Activated CD4-positive, alpha-beta T cell treated with anti-CD3 and anti-CD28 coated beads for 36 hours (primary cell): ENCODE measurements at regions of chr7 and their contacts with region 1.

Region 1: GRCh38 chr7:24869572-24869971 is 110.4 kb downstream of the OSBPL3 start:
- DNase-seq: no peak
- ATAC-seq: no peak
- H3K4me3 Mint-ChIP-seq: no peak overlapping the region
- H3K27ac Mint-ChIP-seq: no peak overlapping the region
- H3K4me1 Mint-ChIP-seq: peaks cover 41% of the 10 kb centered on the region
- H3K27me3 Mint-ChIP-seq: no peaks in the 10 kb centered on the region

Region 2: DNA sequence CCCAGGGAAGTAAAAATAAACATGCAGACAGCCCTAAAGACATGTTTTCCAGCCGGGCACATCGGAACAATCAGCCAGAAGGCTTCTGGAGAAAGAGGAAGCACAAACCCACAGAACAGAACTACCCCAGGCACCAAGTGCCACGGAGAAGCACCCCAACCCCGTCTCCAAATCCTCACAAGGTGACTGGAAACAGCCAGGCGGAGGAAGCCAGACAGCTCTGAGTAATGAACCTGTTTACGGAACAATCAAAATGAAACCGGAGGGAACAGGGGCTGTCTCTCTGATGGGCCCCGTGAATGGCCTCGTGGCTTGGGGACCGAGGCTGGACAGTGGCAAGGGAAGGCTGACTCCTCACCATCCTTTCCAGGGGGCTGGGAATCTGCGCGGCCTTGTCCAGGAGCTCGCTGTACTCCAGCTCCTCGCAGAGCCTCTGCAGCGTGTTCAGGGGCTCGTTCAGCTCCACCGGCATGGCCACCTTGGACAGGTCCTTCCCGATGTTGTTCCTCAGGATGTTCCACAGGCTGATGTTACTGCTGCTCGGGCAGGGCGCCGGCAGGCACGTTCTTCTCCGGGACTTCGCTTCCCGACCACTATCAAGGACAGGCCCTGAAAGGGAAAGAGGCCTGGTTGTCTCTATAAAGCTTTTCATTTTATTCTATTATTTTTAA is 35.3 kb before region 1 on chr7:
- CTCF ChIA-PET with region 1: no interaction called
- POLR2A ChIA-PET with region 1: no interaction called
- intact Hi-C with region 1: loop called in 1 of 2 experiments (anchors 2 kb)
- DNase-seq: peak; percentile 18
- ATAC-seq: no peak
- H3K4me3 Mint-ChIP-seq: no peak overlapping the region
- H3K27ac Mint-ChIP-seq: no peak overlapping the region
- H3K4me1 Mint-ChIP-seq: peaks cover 43% of the 10 kb centered on the region
- H3K27me3 Mint-ChIP-seq: no peaks in the 10 kb centered on the region

Region 3: DNA sequence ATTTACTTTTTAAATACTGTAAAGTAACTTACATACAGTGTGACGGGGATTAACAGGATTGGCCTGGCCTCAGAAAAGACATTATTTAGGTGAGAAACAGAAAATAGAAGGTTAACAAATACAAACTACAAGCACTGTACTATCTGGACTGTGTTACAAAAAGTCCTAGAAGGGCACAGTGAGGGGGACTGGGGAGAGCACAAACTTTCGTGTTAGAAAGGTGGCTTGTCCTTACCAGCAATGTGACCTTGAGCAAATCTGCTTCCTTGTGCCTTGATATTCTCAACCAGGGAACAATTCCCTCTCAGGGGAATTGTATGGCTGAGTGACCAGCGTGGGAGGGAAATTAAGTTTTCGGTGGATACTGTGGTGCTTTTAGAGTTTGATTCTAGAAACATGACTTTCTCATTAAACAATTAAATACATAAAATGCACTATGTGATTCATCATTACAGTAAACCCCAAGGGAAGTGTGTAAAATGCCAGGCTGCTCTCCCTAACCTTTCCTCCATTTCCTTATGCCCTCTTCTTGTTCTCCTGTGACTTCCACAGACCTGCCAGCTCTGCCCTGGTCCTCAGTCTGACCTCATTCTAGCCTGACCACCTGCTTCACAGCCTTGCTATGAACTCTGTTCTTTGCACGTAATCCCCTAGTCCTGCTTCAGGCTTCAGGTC is 52.7 kb after region 1 on chr7:
- CTCF ChIA-PET with region 1: interaction called, 3 read pairs
- POLR2A ChIA-PET with region 1: no interaction called
- intact Hi-C with region 1: loop called (anchors 2 to 5 kb)
- DNase-seq: no peak
- ATAC-seq: no peak
- H3K4me3 Mint-ChIP-seq: no peak overlapping the region
- H3K27ac Mint-ChIP-seq: peak overlapping the region; percentile 69
- H3K4me1 Mint-ChIP-seq: peaks cover 78% of the 10 kb centered on the region
- H3K27me3 Mint-ChIP-seq: no peaks in the 10 kb centered on the region

Region 4: DNA sequence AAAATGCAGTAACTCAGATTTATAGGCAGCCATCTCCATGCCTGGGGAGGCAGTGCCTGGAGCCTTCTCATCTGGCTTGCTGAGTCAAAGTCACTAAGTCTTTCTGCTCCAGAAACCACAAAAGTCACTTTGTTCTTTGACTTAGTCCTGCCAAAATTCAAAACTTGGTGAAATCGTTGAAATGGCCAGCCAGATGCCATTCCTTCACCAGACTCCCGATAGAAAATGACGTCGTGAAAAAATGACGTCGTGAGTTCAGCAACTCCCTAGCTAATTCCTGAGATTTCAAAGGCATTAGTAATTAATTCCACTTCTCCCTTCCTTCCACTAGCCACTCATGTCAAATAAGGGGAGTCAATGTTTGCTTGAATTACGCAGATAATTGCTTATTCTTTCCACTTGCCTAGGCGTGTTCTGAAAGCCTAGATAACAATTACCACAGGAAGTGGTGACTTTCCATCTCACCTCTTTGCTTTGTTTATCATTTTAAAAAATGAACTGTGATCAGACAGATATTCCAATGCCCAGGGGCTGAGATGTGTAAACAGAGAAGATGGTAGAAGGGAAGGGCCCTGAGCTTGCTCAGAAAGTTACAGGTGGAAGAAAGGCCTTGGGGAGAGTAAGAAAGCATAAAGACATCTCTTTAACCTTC is 158.9 kb after region 1 on chr7:
- CTCF ChIA-PET with region 1: no interaction called
- POLR2A ChIA-PET with region 1: no interaction called
- intact Hi-C with region 1: loop called in 1 of 2 experiments (anchors 1 kb)
- DNase-seq: peak; percentile 50
- ATAC-seq: peak; percentile 89
- H3K4me3 Mint-ChIP-seq: peak overlapping the region; percentile 41
- H3K27ac Mint-ChIP-seq: peak overlapping the region; percentile 87
- H3K4me1 Mint-ChIP-seq: peaks cover 46% of the 10 kb centered on the region
- H3K27me3 Mint-ChIP-seq: no peaks in the 10 kb centered on the region

Region 5: GRCh38 chr7:25117226-25118047 is 247.9 kb after region 1 on chr7:
- CTCF ChIA-PET with region 1: no interaction called
- POLR2A ChIA-PET with region 1: no interaction called
- intact Hi-C with region 1: loop called in 1 of 2 experiments (anchors 1 kb)
- DNase-seq: no peak
- ATAC-seq: peak; percentile 86
- H3K4me3 Mint-ChIP-seq: peak overlapping the region; percentile 12
- H3K27ac Mint-ChIP-seq: peak overlapping the region; percentile 43
- H3K4me1 Mint-ChIP-seq: peaks cover 53% of the 10 kb centered on the region
- H3K27me3 Mint-ChIP-seq: no peaks in the 10 kb centered on the region